HCT116 (cell line): ENCODE measurements at regions of chr21 and their contacts with region 1.

Region 1: GRCh38 chr21:34745557-34746255 is 76.9 kb downstream of the CLIC6 start:
- DNase-seq: peak; percentile 77
- ATAC-seq: peak; percentile 94
- H3K4me3 ChIP-seq: peak overlapping the region in 1 of 2 experiments; percentile 8; a peak in 3 of 4 replicates
- H3K27ac ChIP-seq: peak overlapping the region; percentile 36; the same call in 1 of the 2 replicates
- H3K4me1 ChIP-seq: peaks cover 7 to 18% of the 10 kb centered on the region in 2 experiments; a peak in 3 of 4 replicates
- H3K27me3 ChIP-seq: no peaks in the 10 kb centered on the region; the same call in 1 of the 2 replicates
- CTCF ChIP-seq: peak; percentile 82 to 94 (median 90)
- POLR2A ChIP-seq: no peak
- RAD21 ChIP-seq: peak; percentile 98

Region 2: DNA sequence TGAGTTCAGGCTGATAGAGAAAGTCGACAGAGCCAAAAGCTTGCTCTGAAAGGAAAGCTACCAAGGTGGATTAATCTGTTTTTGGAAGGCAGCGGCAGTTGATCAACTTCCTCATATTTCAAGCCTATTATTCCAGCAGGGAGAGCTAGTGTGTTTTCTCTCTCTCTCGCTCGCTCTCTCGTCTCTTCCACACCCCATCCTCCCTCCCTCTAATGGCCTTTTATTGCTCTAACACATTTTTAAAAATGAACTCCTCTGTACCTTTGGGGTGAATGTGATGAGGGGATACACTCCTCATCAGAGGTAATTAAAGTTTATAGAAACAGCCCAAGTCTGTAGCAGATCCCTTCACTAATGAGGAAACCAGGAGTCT is 49.5 kb after region 1 on chr21:
- CTCF ChIA-PET with region 1: interaction called, 21 read pairs
- POLR2A ChIA-PET with region 1: interaction called, 3 read pairs
- RAD21 ChIA-PET with region 1: interaction called, 7 to 8 read pairs
- intact Hi-C with region 1: no loop called
- DNase-seq: no peak
- ATAC-seq: peak; percentile 10
- H3K4me3 ChIP-seq: peak overlapping the region in 1 of 2 experiments; percentile 28; a peak in 1 of 4 replicates
- H3K27ac ChIP-seq: peak overlapping the region; percentile 61
- H3K4me1 ChIP-seq: peaks cover 50 to 57% of the 10 kb centered on the region in 2 experiments
- H3K27me3 ChIP-seq: no peaks in the 10 kb centered on the region
- CTCF ChIP-seq: peak in 2 of 3 experiments; percentile 6 to 13; a peak in 1 of 6 replicates
- POLR2A ChIP-seq: no peak
- RAD21 ChIP-seq: peak; percentile 25

Region 3: GRCh38 chr21:34836103-34836932 is 90.6 kb after region 1 on chr21:
- CTCF ChIA-PET with region 1: interaction called, 16 read pairs
- POLR2A ChIA-PET with region 1: no interaction called
- RAD21 ChIA-PET with region 1: interaction called, 3 read pairs
- intact Hi-C with region 1: no loop called
- DNase-seq: peak; percentile 97
- ATAC-seq: peak; percentile 95
- H3K4me3 ChIP-seq: peak overlapping the region; percentile 23 to 35
- H3K27ac ChIP-seq: peak overlapping the region; percentile 79
- H3K4me1 ChIP-seq: peaks cover 36 to 49% of the 10 kb centered on the region in 2 experiments
- H3K27me3 ChIP-seq: no peaks in the 10 kb centered on the region
- CTCF ChIP-seq: no peak
- POLR2A ChIP-seq: no peak
- RAD21 ChIP-seq: no peak

Region 4: GRCh38 chr21:34845521-34846451 is 100.1 kb after region 1 on chr21:
- CTCF ChIA-PET with region 1: interaction called, 6 read pairs
- POLR2A ChIA-PET with region 1: no interaction called
- RAD21 ChIA-PET with region 1: interaction called, 4 to 9 read pairs
- intact Hi-C with region 1: loop called (anchors 1 kb)
- DNase-seq: peak; percentile 75
- ATAC-seq: peak; percentile 77
- H3K4me3 ChIP-seq: peak overlapping the region in 1 of 2 experiments; percentile 33; a peak in 3 of 4 replicates
- H3K27ac ChIP-seq: peak overlapping the region; percentile 65
- H3K4me1 ChIP-seq: peaks cover 57 to 60% of the 10 kb centered on the region in 2 experiments
- H3K27me3 ChIP-seq: no peaks in the 10 kb centered on the region
- CTCF ChIP-seq: no peak
- POLR2A ChIP-seq: no peak
- RAD21 ChIP-seq: no peak

Region 5: DNA sequence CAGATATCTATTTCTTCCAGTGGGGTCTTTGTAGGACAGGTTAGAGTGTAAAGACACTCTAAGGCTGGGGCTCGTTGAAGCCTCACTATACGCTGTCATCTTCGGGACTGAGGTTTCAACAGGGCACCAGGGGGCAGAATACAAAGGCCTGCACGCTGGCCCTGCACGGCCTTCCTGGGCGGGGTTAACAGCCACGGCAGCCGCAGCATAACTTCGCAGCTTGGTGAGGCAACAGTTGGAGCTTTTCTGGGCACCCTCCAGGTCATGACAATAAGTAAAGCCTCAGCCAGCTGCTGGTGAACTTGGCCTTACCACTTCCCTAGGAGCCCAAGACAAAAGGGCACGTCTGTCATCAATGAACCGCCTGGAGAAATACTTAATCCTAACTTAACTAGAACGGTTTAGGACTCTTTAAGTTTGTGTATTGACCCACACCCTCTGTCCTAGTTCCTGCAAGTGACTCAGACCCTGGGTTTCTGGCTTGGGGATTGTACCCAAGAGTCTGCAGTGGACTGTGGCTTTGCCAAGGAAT is 305.6 kb after region 1 on chr21:
- CTCF ChIA-PET with region 1: interaction called, 6 read pairs
- POLR2A ChIA-PET with region 1: no interaction called
- RAD21 ChIA-PET with region 1: interaction called in 1 of 2 experiments, 5 read pairs
- intact Hi-C with region 1: loop called (anchors 5 kb)
- DNase-seq: peak; percentile 80
- ATAC-seq: peak; percentile 91
- H3K4me3 ChIP-seq: peak overlapping the region in 1 of 2 experiments; percentile 31; a peak in 2 of 4 replicates
- H3K27ac ChIP-seq: peak overlapping the region; percentile 43; the same call in 1 of the 2 replicates
- H3K4me1 ChIP-seq: peaks cover 27 to 50% of the 10 kb centered on the region in 2 experiments
- H3K27me3 ChIP-seq: no peaks in the 10 kb centered on the region
- CTCF ChIP-seq: peak; percentile 42 to 78 (median 75); a peak in 5 of 6 replicates
- POLR2A ChIP-seq: no peak
- RAD21 ChIP-seq: peak; percentile 76

Region 6: DNA sequence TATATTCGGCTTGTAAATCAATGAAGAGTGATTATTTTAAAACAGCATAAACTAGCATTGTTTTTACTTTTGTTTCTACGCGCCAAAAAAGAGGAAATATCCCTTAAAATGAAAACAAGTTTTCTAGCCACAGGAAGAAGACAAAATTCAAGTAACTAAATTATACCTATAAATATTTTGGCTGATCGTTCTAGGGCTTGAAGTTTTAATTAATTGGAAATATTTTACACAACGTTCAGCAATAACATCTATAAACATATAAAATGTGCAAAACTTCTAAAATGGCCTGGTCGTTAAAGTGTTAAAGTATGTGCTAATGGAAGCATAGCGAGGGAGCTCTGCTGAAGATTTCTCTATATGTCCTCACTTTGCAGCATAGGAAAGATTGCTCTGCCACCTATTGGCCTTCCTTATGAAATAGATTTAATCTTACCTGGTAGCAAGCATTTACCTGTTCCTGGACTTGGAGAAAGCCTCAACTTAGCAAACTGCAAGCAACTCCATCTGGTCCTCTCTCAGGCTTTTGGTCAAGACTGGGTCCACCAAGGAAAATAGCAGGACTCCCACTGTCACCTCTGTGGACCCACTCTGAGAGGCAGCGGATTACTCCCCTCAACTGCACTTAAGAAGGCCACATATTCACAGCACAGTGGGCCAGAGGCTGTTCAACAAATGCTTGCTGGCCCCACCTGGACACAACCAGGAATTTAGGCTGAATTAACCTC is 654.7 kb after region 1 on chr21:
- CTCF ChIA-PET with region 1: interaction called, 21 read pairs
- POLR2A ChIA-PET with region 1: no interaction called
- RAD21 ChIA-PET with region 1: interaction called, 4 to 12 read pairs
- intact Hi-C with region 1: loop called (anchors 1 kb)
- DNase-seq: peak; percentile 81
- ATAC-seq: peak; percentile 96
- H3K4me3 ChIP-seq: no peak overlapping the region
- H3K27ac ChIP-seq: no peak overlapping the region
- H3K4me1 ChIP-seq: peaks cover 6 to 29% of the 10 kb centered on the region in 2 experiments; a peak in 3 of 4 replicates
- H3K27me3 ChIP-seq: no peaks in the 10 kb centered on the region
- CTCF ChIP-seq: peak; percentile 52 to 71 (median 65); a peak in 5 of 6 replicates
- POLR2A ChIP-seq: no peak
- RAD21 ChIP-seq: peak; percentile 89

Region 7: DNA sequence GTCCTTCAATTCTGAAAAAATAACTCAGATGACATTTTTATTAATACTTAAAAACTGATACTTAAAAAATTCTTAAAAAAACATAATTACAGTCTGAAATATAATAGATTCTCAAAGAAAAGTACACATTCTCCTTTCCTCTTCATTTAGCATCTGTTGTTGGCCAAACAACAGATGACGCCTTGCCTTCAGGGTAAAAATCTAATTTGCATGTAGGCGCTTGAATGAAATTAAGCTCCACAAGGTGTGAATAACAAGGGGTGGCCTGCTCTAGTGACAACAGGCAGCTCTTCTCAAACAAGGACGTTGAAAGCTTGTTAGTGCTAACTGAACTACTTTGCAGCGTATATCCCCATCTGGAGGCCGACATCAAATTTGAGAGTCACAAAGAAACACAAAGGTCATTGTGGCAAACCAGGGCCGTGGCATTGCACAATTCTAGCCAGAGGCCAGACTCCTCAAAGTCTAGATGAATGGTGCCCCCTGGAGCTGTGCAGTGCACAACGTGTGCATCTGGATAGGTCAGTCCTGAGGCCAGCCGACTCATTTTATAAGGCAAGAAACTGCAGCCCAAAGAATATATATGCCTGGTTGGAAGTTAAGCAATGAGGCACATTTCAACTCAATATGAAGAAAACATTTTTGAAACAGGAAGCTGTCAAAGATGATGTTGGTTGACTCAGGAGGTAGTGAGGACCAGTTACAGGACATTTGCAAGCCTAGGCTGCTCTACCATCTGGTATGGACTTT is 762.6 kb after region 1 on chr21:
- CTCF ChIA-PET with region 1: interaction called, 11 read pairs
- POLR2A ChIA-PET with region 1: no interaction called
- RAD21 ChIA-PET with region 1: interaction called, 3 read pairs
- intact Hi-C with region 1: loop called (anchors 1 kb)
- DNase-seq: peak; percentile 58
- ATAC-seq: peak; percentile 96
- H3K4me3 ChIP-seq: no peak overlapping the region
- H3K27ac ChIP-seq: no peak overlapping the region
- H3K4me1 ChIP-seq: peaks cover 0 to 5% of the 10 kb centered on the region in 2 experiments; a peak in 1 of 4 replicates
- H3K27me3 ChIP-seq: peaks cover 6% of the 10 kb centered on the region; the same call in 1 of the 2 replicates
- CTCF ChIP-seq: peak; percentile 38 to 54 (median 46); a peak in 4 of 6 replicates
- POLR2A ChIP-seq: no peak
- RAD21 ChIP-seq: peak; percentile 70